A549 (cell line): ENCODE measurements at regions of chr19 and their contacts with region 1.

Region 1: GRCh38 chr19:3544742-3545668 is 6.0 kb downstream of the TEKTIP1 start:
- DNase-seq: peak; percentile 63 to 65
- ATAC-seq: peak; percentile 73 to 83
- H3K4me3 ChIP-seq: no peak overlapping the region
- H3K27ac ChIP-seq: peak overlapping the region in 1 of 2 experiments; percentile 43; a peak in 2 of 6 replicates
- H3K4me1 ChIP-seq: no peaks in the 10 kb centered on the region
- CTCF ChIP-seq: peak; percentile 69
- EP300 ChIP-seq: no peak
- POLR2A ChIP-seq: no peak
- RAD21 ChIP-seq: peak; percentile 65 to 70

Region 2: DNA sequence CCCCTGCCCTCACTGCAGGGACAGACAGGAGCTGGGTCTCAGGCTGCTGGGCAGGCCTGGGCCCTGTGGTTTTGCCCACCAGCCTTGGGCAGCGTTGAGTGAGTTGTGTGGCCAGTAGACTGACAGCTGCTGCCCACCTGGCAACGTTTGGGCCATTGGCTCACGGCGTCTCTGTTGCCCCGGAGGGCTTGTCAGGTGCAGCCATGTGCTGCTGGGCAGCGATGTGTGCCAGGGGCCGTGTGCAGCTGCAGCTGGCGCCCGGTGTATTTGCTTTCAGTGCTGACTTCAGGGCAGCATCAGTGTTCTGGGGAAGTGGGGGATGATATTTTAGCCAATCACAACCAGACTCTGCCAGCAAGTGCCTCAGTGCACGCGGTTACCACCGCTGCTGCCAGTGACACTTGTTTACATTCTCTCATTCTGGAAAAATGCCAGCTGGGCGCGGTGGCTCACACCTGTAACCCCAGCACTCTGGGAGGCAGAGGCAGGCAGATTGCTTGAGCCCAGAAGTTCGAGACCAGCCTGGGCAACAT is 28.3 kb before region 1 on chr19:
- CTCF ChIA-PET with region 1: interaction called, 12 read pairs
- POLR2A ChIA-PET with region 1: no interaction called
- DNase-seq: no peak
- ATAC-seq: no peak; a peak in 1 of 6 replicates
- H3K4me3 ChIP-seq: no peak overlapping the region
- H3K27ac ChIP-seq: no peak overlapping the region; a peak in 1 of 6 replicates
- H3K4me1 ChIP-seq: peaks cover 13% of the 10 kb centered on the region; the same call in 2 of the 3 replicates
- CTCF ChIP-seq: no peak
- EP300 ChIP-seq: no peak
- POLR2A ChIP-seq: no peak
- RAD21 ChIP-seq: no peak

Region 3: DNA sequence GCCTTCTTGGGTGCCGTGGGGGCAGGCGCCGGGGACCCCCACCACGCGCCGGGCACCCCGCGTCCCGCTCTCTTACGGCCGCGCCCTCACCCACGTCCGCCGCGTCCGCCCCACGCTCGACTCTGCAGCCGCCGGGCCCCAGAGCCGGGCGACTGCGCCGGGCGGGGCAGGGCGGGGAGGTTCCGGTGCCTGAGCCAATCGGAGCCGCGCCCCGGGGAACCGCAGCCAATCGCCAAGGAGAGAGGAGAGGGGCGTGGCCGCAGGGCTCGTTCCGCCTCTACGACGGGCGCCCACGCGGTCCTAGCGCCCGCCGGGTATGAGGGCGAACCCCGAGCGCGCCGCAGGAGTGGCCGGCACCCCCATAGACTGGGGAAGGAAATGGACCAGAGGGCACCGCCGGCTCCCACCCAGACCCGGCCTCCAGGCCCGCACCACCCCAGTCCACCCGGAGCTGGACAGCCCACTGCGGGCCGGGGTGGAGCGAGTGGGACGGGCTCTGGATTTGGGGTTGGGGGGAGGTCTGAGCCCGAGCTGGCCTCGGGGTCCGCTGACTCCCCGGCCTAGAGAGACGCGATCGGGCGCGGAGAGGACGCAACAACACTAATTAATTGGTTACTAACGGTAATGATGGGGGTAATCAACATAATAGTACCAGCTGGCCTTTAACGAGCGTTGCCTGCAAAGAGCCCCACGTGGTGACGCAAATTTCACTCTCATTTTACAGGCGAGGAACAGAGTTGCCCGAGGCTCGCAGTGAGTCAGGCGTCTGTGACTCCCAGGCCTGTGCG is 12.7 kb after region 1 on chr19 and contains the start of gene MFSD12:
- CTCF ChIA-PET with region 1: interaction called, 54 read pairs
- POLR2A ChIA-PET with region 1: interaction called, 3 read pairs
- DNase-seq: peak; percentile 92 to 93
- ATAC-seq: peak; percentile 92 to 94
- H3K4me3 ChIP-seq: peak within 1 kb of the TSS; percentile 87
- H3K27ac ChIP-seq: peak within 1 kb of the TSS; percentile 89 to 100
- H3K4me1 ChIP-seq: peaks cover 32% of the 10 kb centered on the region
- CTCF ChIP-seq: no peak
- EP300 ChIP-seq: 0 out of 5 replicates have a peak, but pooled peaks of 1 of the 2 experiments have one; percentile 21
- POLR2A ChIP-seq: peak; percentile 56
- RAD21 ChIP-seq: no peak; a peak in 1 of 5 replicates
- polyA plus RNA-seq, gene MFSD12: 52.5 and 54.9 TPM in 2 replicates

Region 4: GRCh38 chr19:3565139-3565538 is 20.1 kb after region 1 on chr19:
- CTCF ChIA-PET with region 1: interaction called, 15 read pairs
- POLR2A ChIA-PET with region 1: no interaction called
- DNase-seq: peak; percentile 63 to 90
- ATAC-seq: peak; percentile 91 to 93
- H3K4me3 ChIP-seq: no peak overlapping the region
- H3K27ac ChIP-seq: peak overlapping the region; percentile 76 to 89
- H3K4me1 ChIP-seq: peaks cover 44% of the 10 kb centered on the region
- CTCF ChIP-seq: no peak
- EP300 ChIP-seq: peak in 1 of 2 experiments; percentile 52; a peak in 1 of 5 replicates
- POLR2A ChIP-seq: no peak
- RAD21 ChIP-seq: no peak

Region 5: GRCh38 chr19:3573884-3574637 is 29.1 kb after region 1 on chr19:
- CTCF ChIA-PET with region 1: interaction called, 100 read pairs
- POLR2A ChIA-PET with region 1: interaction called, 4 read pairs
- DNase-seq: peak; percentile 45 to 98
- ATAC-seq: peak; percentile 28 to 65; a peak in 5 of 6 replicates
- H3K4me3 ChIP-seq: peak overlapping the region; percentile 89; the same call in 2 of the 3 replicates
- H3K27ac ChIP-seq: peak overlapping the region; percentile 62 to 92; a peak in 5 of 6 replicates
- H3K4me1 ChIP-seq: peaks cover 21% of the 10 kb centered on the region
- CTCF ChIP-seq: no peak
- EP300 ChIP-seq: no peak
- POLR2A ChIP-seq: no peak
- RAD21 ChIP-seq: no peak

Region 6: GRCh38 chr19:3607303-3608078 is 62.5 kb after region 1 on chr19:
- CTCF ChIA-PET with region 1: interaction called, 10 read pairs
- POLR2A ChIA-PET with region 1: interaction called, 3 read pairs
- DNase-seq: no peak
- ATAC-seq: peak; percentile 5 to 8; a peak in 4 of 6 replicates
- H3K4me3 ChIP-seq: peak overlapping the region; percentile 40; the same call in 2 of the 3 replicates
- H3K27ac ChIP-seq: peak overlapping the region; percentile 72 to 91
- H3K4me1 ChIP-seq: peaks cover 19% of the 10 kb centered on the region
- CTCF ChIP-seq: no peak
- EP300 ChIP-seq: no peak
- POLR2A ChIP-seq: no peak
- RAD21 ChIP-seq: no peak

Region 7: GRCh38 chr19:3618144-3618810 is 73.3 kb after region 1 on chr19:
- CTCF ChIA-PET with region 1: interaction called, 16 read pairs
- POLR2A ChIA-PET with region 1: no interaction called
- DNase-seq: peak in 1 of 2 experiments; percentile 44
- ATAC-seq: peak; percentile 50 to 83; a peak in 4 of 6 replicates
- H3K4me3 ChIP-seq: no peak overlapping the region
- H3K27ac ChIP-seq: no peak overlapping the region
- H3K4me1 ChIP-seq: no peaks in the 10 kb centered on the region
- CTCF ChIP-seq: peak; percentile 67
- EP300 ChIP-seq: no peak
- POLR2A ChIP-seq: no peak
- RAD21 ChIP-seq: peak; percentile 54 to 65